Breast epithelium (tissue), 4 donors: ENCODE measurements at regions of chr20 and their contacts with region 1.

Region 1: GRCh38 chr20:44461803-44462174 is 13.9 kb upstream of the TTPAL start:
- DNase-seq: no peak
- H3K4me3 ChIP-seq: no peak overlapping the region
- H3K27ac ChIP-seq: no peak overlapping the region
- H3K4me1 ChIP-seq: no peaks in the 10 kb centered on the region
- H3K27me3 ChIP-seq: no peaks in the 10 kb centered on the region
- CTCF ChIP-seq: no peak
- POLR2A ChIP-seq: no peak

Region 2: GRCh38 chr20:44485078-44485828 is 23.5 kb after region 1 on chr20:
- intact Hi-C with region 1: loop called (anchors 1 kb)
- DNase-seq: no peak
- H3K4me3 ChIP-seq: no peak overlapping the region
- H3K27ac ChIP-seq: peak overlapping the region in 1 of 2 donors; percentile 54
- H3K4me1 ChIP-seq: no peaks in the 10 kb centered on the region
- H3K27me3 ChIP-seq: no peaks in the 10 kb centered on the region
- CTCF ChIP-seq: no peak
- POLR2A ChIP-seq: no peak